Astrocyte of the cerebellum (primary cell): ENCODE measurements at regions of chr10 and their contacts with region 1.

Region 1: GRCh38 chr10:67959839-67960476 is 75.5 kb downstream of the SIRT1 start:
- DNase-seq: no peak
- H3K4me3 ChIP-seq: no peak overlapping the region
- CTCF ChIP-seq: no peak

Region 2: DNA sequence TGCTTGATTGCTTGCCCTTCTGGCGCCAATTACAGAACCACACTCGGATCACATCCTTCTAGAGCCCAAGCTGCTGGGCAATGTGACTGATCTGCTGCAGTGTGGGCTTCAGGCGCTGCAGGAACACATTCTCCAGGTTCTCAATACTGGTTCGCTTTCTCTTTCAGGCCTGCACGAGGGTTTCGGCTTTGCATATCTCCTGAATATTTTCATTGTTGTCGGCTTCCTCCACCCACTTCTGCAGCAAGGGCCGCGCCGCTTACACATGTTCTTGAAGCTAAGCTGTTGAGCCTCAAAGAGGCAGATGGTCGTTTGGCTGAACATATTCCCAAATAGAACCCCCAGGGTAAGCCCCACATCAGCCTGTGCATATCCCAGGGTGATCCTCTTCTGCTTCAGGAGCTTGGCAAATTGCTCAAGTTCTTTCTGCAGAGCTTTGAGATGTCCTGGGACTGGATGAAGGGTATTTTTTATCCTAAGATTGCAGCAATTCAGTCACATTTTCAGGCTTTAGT is 50.5 kb after region 1 on chr10:
- in situ Hi-C with region 1: loop called (anchors 5 kb)
- DNase-seq: no peak
- H3K4me3 ChIP-seq: no peak overlapping the region
- CTCF ChIP-seq: no peak

Region 3: DNA sequence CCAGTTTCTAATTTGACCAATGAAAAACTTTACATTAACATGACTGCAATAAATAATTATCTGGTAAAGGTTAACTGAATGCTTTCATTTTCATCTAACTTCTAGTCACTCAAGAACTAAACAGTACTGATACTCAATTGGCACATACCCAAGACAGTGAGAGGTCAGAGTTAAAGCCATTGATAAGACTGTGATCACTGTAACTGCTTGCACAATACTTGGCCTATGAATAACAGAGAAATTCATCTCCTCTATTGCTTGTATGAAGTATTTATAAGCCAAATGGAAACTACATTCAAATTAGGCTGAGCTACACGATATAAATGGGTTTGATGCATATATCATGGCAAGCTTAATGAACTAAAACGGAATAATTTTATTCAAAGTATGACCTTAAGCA is 72.2 kb after region 1 on chr10:
- in situ Hi-C with region 1: no loop called
- DNase-seq: no peak
- H3K4me3 ChIP-seq: no peak overlapping the region
- CTCF ChIP-seq: no peak

Region 4: GRCh38 chr10:68052463-68052862 is 92.5 kb after region 1 on chr10:
- in situ Hi-C with region 1: loop called (anchors 5 kb)
- DNase-seq: no peak
- H3K4me3 ChIP-seq: no peak overlapping the region
- CTCF ChIP-seq: no peak